ENCODE measurements at regions of chr13 and their contacts with region 1.

Region 1: GRCh38 chr13:36420437-36420891 is 11.8 kb upstream of the CCNA1 start:
- DNase-seq: peak; percentile 24
- ATAC-seq: peak; percentile 80
- H3K4me3 ChIP-seq: no peak overlapping the region
- H3K27ac ChIP-seq: no peak overlapping the region
- H3K4me1 ChIP-seq: no peaks in the 10 kb centered on the region
- H3K27me3 ChIP-seq: no peaks in the 10 kb centered on the region
- CTCF ChIP-seq: peak; percentile 13 to 70 (median 65); a peak in 4 of 6 replicates
- POLR2A ChIP-seq: no peak
- RAD21 ChIP-seq: peak; percentile 42

Region 2: GRCh38 chr13:36124236-36124822 is 296.1 kb before region 1 on chr13:
- CTCF ChIA-PET with region 1: no interaction called
- POLR2A ChIA-PET with region 1: no interaction called
- RAD21 ChIA-PET with region 1: no interaction called
- intact Hi-C with region 1: no loop called
- DNase-seq: no peak
- ATAC-seq: no peak
- H3K4me3 ChIP-seq: no peak overlapping the region
- H3K27ac ChIP-seq: no peak overlapping the region
- H3K4me1 ChIP-seq: no peaks in the 10 kb centered on the region
- H3K27me3 ChIP-seq: no peaks in the 10 kb centered on the region
- CTCF ChIP-seq: no peak
- POLR2A ChIP-seq: no peak
- RAD21 ChIP-seq: no peak

Region 3: GRCh38 chr13:36310417-36311108 is 109.9 kb before region 1 on chr13:
- CTCF ChIA-PET with region 1: no interaction called
- POLR2A ChIA-PET with region 1: no interaction called
- RAD21 ChIA-PET with region 1: no interaction called
- intact Hi-C with region 1: no loop called
- DNase-seq: no peak
- ATAC-seq: no peak
- H3K4me3 ChIP-seq: no peak overlapping the region
- H3K27ac ChIP-seq: no peak overlapping the region
- H3K4me1 ChIP-seq: no peaks in the 10 kb centered on the region
- H3K27me3 ChIP-seq: no peaks in the 10 kb centered on the region
- CTCF ChIP-seq: no peak
- POLR2A ChIP-seq: no peak
- RAD21 ChIP-seq: no peak

Region 4: GRCh38 chr13:36736119-36736726 is 315.8 kb after region 1 on chr13:
- CTCF ChIA-PET with region 1: no interaction called
- POLR2A ChIA-PET with region 1: no interaction called
- RAD21 ChIA-PET with region 1: no interaction called
- intact Hi-C with region 1: loop called (anchors 2 kb)
- DNase-seq: peak; percentile 31
- ATAC-seq: peak; percentile 61; the same call in 1 of the 2 replicates
- H3K4me3 ChIP-seq: no peak overlapping the region
- H3K27ac ChIP-seq: no peak overlapping the region
- H3K4me1 ChIP-seq: no peaks in the 10 kb centered on the region
- H3K27me3 ChIP-seq: no peaks in the 10 kb centered on the region
- CTCF ChIP-seq: peak; percentile 23 to 78 (median 63); a peak in 4 of 6 replicates
- POLR2A ChIP-seq: no peak
- RAD21 ChIP-seq: peak; percentile 29; the same call in 1 of the 2 replicates

Region 5: GRCh38 chr13:36981156-36981743 is 560.8 kb after region 1 on chr13:
- CTCF ChIA-PET with region 1: no interaction called
- POLR2A ChIA-PET with region 1: no interaction called
- RAD21 ChIA-PET with region 1: no interaction called
- intact Hi-C with region 1: loop called (anchors 5 kb)
- DNase-seq: no peak
- ATAC-seq: peak; percentile 54
- H3K4me3 ChIP-seq: no peak overlapping the region
- H3K27ac ChIP-seq: no peak overlapping the region
- H3K4me1 ChIP-seq: no peaks in the 10 kb centered on the region
- H3K27me3 ChIP-seq: no peaks in the 10 kb centered on the region
- CTCF ChIP-seq: peak; percentile 30 to 63 (median 37); a peak in 4 of 6 replicates
- POLR2A ChIP-seq: no peak
- RAD21 ChIP-seq: peak; percentile 51; the same call in 1 of the 2 replicates

Region 6: DNA sequence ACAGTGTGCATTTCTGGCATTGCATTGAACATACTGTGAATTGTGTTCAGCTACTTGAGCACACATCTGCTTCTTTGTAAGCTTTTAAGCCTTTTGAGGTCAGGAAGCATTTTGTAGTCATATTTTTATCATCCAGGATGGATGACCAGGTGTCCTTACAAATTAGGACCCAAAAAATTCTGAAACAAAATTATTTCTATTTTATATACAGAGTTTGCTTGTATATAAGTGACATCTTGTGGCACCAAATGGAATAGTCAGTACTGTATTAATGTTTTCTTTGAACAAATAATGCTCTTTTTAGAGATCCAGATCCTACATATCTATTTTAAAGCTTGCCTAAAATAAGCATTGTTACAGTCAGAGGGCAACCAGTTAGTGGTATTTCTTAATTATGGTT is 648.5 kb after region 1 on chr13:
- CTCF ChIA-PET with region 1: no interaction called
- POLR2A ChIA-PET with region 1: no interaction called
- RAD21 ChIA-PET with region 1: no interaction called
- intact Hi-C with region 1: loop called (anchors 5 kb)
- DNase-seq: peak; percentile 0
- ATAC-seq: peak; percentile 59; the same call in 1 of the 2 replicates
- H3K4me3 ChIP-seq: no peak overlapping the region
- H3K27ac ChIP-seq: no peak overlapping the region
- H3K4me1 ChIP-seq: no peaks in the 10 kb centered on the region
- H3K27me3 ChIP-seq: no peaks in the 10 kb centered on the region
- CTCF ChIP-seq: peak; percentile 13 to 38 (median 26); a peak in 4 of 6 replicates
- POLR2A ChIP-seq: no peak
- RAD21 ChIP-seq: peak; percentile 54

Measured in HCT116 (cell line).